Activated naive CD4-positive, alpha-beta T cell treated with anti-CD3 and anti-CD28 coated beads for 36 hours (primary cell): ENCODE measurements at regions of chr11 and their contacts with region 1.

Region 1: GRCh38 chr11:115208808-115209259 is 295.4 kb downstream of the CADM1 start:
- DNase-seq: no peak
- H3K4me3 Mint-ChIP-seq: no peak overlapping the region
- H3K27ac Mint-ChIP-seq: no peak overlapping the region
- H3K4me1 Mint-ChIP-seq: no peaks in the 10 kb centered on the region
- H3K27me3 Mint-ChIP-seq: peaks cover 2% of the 10 kb centered on the region

Region 2: GRCh38 chr11:115170133-115170815 is 38.6 kb before region 1 on chr11:
- CTCF ChIA-PET with region 1: no interaction called
- intact Hi-C with region 1: loop called (anchors 1 kb)
- DNase-seq: peak; percentile 31
- H3K4me3 Mint-ChIP-seq: no peak overlapping the region
- H3K27ac Mint-ChIP-seq: no peak overlapping the region
- H3K4me1 Mint-ChIP-seq: no peaks in the 10 kb centered on the region
- H3K27me3 Mint-ChIP-seq: no peaks in the 10 kb centered on the region